Naive thymus-derived CD4-positive, alpha-beta T cell (primary cell): ENCODE measurements at regions of chr12 and their contacts with region 1.

Region 1: DNA sequence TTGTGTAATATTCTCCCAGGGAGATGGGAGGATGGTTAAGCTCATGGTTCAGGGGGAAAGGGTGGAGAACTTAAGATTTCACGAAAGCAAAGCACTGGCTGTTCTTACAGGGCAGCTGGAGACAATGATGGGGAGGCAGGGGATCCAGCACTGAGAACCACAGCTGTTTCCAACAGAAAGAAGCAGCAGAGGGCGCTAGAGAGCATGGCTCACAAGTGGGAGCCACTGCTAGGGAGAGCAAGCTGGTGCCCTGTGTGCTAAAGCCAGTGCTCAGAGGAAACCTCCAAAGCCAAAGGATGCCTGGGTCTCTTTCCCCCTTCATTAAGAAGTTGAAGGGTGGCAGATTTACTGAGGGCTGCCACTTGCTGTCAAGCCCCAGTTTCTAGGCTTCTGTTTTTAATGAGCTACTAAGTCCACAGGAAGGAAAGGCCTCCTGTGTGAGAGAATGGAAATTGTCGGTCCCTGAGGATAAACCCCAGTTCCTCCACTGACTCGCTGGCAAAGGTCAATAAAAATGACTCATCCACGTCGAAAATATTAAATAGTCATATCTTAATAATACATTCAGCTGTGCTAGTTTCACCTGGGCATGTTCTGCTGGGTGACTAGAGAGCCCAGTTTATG is 199.7 kb downstream of the ANO2 start:
- DNase-seq: peak in 6 of 9 donors; percentile 17 to 54 (median 40)
- ATAC-seq: peak; percentile 58
- H3K4me3 ChIP-seq: no peak overlapping the region
- H3K4me3 Mint-ChIP-seq: no peak overlapping the region
- H3K27ac ChIP-seq: no peak overlapping the region
- H3K27ac Mint-ChIP-seq: peak overlapping the region in 1 of 9 donors; percentile 49
- H3K4me1 ChIP-seq: no peaks in the 10 kb centered on the region
- H3K4me1 Mint-ChIP-seq: peaks cover 0 to 38% (median 17%) of the 10 kb centered on the region in 7 donors
- H3K27me3 ChIP-seq: no peaks in the 10 kb centered on the region
- H3K27me3 Mint-ChIP-seq: peaks cover 0 to 7% (median 7%) of the 10 kb centered on the region in 5 donors

Region 2: DNA sequence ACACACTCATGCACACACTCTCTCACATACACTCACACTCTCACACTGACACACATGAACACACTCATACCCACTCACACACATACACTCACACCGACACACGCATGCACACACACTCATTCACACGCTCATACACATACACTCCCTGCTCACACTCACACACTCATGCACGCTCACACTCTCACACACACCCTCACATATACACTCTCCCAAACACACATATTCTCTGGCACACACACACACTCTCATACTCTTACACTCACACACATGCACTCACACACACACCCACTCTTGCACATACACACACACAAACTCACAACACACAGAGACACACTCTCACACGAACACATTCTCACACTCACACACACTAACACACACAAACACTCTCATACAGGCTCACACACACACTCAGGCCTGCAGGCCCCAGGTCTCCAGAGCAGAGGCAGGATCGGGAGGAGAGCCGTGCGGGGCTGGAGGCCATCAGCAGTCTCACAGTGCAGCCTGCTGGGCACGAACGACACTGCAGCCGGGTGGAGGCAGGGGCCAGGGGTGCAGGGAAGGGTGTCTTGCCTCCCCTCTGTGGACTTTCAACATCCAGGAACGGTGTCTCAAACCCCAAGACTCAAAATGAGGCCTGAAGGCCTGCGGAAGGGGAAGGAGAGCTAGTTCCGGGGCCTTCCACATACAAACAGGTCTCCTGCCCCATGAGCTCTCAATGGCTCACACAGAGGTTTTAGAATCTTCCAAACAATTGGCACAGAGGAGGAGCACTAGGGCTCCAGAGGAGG is 51.0 kb after region 1 on chr12:
- CTCF ChIA-PET with region 1: interaction called, 3 read pairs
- POLR2A ChIA-PET with region 1: no interaction called
- intact Hi-C with region 1: loop called in 1 of 2 experiments (anchors 1 kb)
- DNase-seq: peak in 3 of 9 donors; percentile 21 to 28 (median 28)
- ATAC-seq: peak; percentile 31
- H3K4me3 ChIP-seq: no peak overlapping the region
- H3K4me3 Mint-ChIP-seq: no peak overlapping the region
- H3K27ac ChIP-seq: no peak overlapping the region
- H3K27ac Mint-ChIP-seq: no peak overlapping the region
- H3K4me1 ChIP-seq: no peaks in the 10 kb centered on the region
- H3K4me1 Mint-ChIP-seq: no peaks in the 10 kb centered on the region
- H3K27me3 ChIP-seq: no peaks in the 10 kb centered on the region
- H3K27me3 Mint-ChIP-seq: peaks cover 0 to 14% (median 11%) of the 10 kb centered on the region in 5 donors

Region 3: GRCh38 chr12:5872735-5873134 is 127.4 kb after region 1 on chr12:
- CTCF ChIA-PET with region 1: no interaction called
- POLR2A ChIA-PET with region 1: no interaction called
- intact Hi-C with region 1: loop called in 1 of 2 experiments (anchors 2 kb)
- DNase-seq: no peak
- ATAC-seq: no peak
- H3K4me3 ChIP-seq: no peak overlapping the region
- H3K4me3 Mint-ChIP-seq: no peak overlapping the region
- H3K27ac ChIP-seq: no peak overlapping the region
- H3K27ac Mint-ChIP-seq: no peak overlapping the region
- H3K4me1 ChIP-seq: no peaks in the 10 kb centered on the region
- H3K4me1 Mint-ChIP-seq: no peaks in the 10 kb centered on the region
- H3K27me3 ChIP-seq: no peaks in the 10 kb centered on the region
- H3K27me3 Mint-ChIP-seq: peaks cover 0 to 25% (median 16%) of the 10 kb centered on the region in 5 donors